ENCODE measurements at regions of chr1 and their contacts with region 1.

Region 1: GRCh38 chr1:20308569-20308968 is 17.9 kb downstream of the VWA5B1 start:
- DNase-seq: no peak
- H3K4me3 ChIP-seq: no peak overlapping the region
- H3K27ac ChIP-seq: no peak overlapping the region
- H3K4me1 ChIP-seq: no peaks in the 10 kb centered on the region
- H3K27me3 ChIP-seq: no peaks in the 10 kb centered on the region
- CTCF ChIP-seq: no peak

Region 2: DNA sequence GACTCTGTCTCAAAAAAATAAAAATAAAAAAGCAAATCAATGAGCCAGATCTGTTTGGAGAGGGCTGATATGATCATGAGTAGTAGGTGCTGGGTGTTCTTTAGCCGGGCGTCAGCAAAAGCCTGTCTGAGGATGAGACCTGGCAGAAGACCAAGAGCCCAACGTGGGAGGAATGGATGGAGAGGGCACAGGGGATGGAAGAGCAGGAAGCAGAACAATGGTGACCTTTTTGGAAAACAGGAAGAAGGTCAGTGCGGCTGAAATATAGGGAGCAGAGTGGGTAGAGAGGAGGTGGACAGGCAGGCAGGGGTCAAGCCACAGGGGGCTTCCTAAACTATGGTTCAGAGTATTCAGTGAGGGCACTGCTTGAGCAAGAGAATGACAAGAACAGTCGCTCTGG is 13.0 kb after region 1 on chr1:
- CTCF ChIA-PET with region 1: interaction called, 10 read pairs
- POLR2A ChIA-PET with region 1: no interaction called
- intact Hi-C with region 1: no loop called
- DNase-seq: no peak
- H3K4me3 ChIP-seq: no peak overlapping the region
- H3K27ac ChIP-seq: no peak overlapping the region
- H3K4me1 ChIP-seq: no peaks in the 10 kb centered on the region
- H3K27me3 ChIP-seq: no peaks in the 10 kb centered on the region
- CTCF ChIP-seq: no peak